Endothelial cell of umbilical vein (primary cell): ENCODE measurements at regions of chr15 and their contacts with region 1.

Region 1: DNA sequence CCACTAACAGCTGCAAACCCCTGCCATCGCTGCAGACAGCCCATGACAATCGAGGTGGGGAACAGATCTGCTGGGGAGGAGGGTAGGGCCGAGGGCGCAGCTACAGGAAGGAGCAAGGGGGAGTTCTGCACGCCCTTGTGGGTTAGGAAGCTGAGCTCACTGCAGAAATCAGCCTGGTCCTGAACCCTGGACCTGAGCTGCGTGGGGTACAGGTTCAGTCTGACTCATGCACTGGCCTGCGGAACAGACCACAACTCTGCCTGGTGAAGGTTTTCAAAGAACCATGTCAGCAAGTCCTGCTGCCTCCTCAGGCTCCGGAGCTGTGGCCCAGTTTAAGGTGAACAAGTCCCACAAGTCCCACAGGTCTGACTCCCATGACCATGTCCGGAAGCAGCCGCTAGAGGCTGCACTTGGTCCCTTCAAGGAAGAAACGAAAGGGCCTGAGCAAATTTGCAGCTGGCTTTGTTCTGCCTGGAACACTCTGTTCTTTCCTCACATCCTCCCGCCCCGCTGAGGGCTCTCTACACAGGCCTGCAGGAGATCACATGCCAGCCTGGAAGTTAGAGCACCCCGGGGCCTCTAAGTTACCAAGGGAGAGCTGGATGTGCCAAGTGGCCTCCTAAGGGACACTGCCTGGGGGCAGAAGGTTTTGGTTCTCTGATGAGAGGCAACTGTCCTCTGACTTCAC is 49.4 kb upstream of the AKAP13 start:
- DNase-seq: peak; percentile 73
- H3K4me3 ChIP-seq: no peak overlapping the region
- H3K27ac ChIP-seq: peak overlapping the region; percentile 6
- H3K4me1 ChIP-seq: peaks cover 14% of the 10 kb centered on the region
- H3K27me3 ChIP-seq: no peaks in the 10 kb centered on the region
- CTCF ChIP-seq: peak; percentile 72 to 79
- POLR2A ChIP-seq: no peak

Region 2: GRCh38 chr15:85380217-85380811 is 49.3 kb after region 1 on chr15 and contains the start of gene AKAP13:
- CTCF ChIA-PET with region 1: interaction called, 5 read pairs
- POLR2A ChIA-PET with region 1: no interaction called
- dilution Hi-C with region 1: no loop called
- intact Hi-C with region 1: loop called (anchors 1 kb)
- DNase-seq: peak; percentile 99
- H3K4me3 ChIP-seq: peak within 1 kb of the TSS; percentile 57 to 79 (median 78)
- H3K27ac ChIP-seq: peak within 1 kb of the TSS; percentile 56
- H3K4me1 ChIP-seq: peaks cover 8% of the 10 kb centered on the region
- H3K27me3 ChIP-seq: no peaks in the 10 kb centered on the region
- CTCF ChIP-seq: no peak
- POLR2A ChIP-seq: peak; percentile 54
- total RNA-seq, gene AKAP13: 80.3 and 87.8 TPM in 2 replicates

Region 3: GRCh38 chr15:85403745-85404144 is 72.7 kb after region 1 on chr15:
- CTCF ChIA-PET with region 1: interaction called, 11 read pairs
- POLR2A ChIA-PET with region 1: no interaction called
- dilution Hi-C with region 1: no loop called
- intact Hi-C with region 1: no loop called
- DNase-seq: no peak
- H3K4me3 ChIP-seq: no peak overlapping the region
- H3K27ac ChIP-seq: no peak overlapping the region
- H3K4me1 ChIP-seq: peaks cover 56% of the 10 kb centered on the region
- H3K27me3 ChIP-seq: no peaks in the 10 kb centered on the region
- CTCF ChIP-seq: no peak
- POLR2A ChIP-seq: no peak

Region 4: DNA sequence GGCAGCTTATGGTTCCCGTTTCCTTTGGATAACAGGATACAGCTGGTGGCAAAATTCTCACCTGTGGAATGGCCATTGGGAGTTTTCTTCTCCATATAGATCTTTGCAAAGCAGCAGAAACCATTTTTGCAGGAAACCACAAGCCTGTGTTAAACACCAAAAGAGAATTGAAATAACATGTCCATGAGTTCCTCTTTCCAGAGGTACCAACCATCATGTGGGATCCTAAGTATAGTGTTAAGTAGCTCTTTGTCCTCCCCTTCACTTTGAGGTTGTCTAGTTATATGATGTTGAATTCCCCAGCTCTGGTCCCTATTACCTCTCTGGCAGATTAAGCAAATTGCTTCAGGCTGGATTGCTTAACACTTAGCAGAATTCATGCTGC is 144.3 kb after region 1 on chr15:
- CTCF ChIA-PET with region 1: interaction called, 7 read pairs
- POLR2A ChIA-PET with region 1: no interaction called
- dilution Hi-C with region 1: no loop called
- intact Hi-C with region 1: loop called (anchors 2 kb)
- DNase-seq: peak; percentile 63
- H3K4me3 ChIP-seq: no peak overlapping the region
- H3K27ac ChIP-seq: no peak overlapping the region
- H3K4me1 ChIP-seq: peaks cover 40% of the 10 kb centered on the region
- H3K27me3 ChIP-seq: no peaks in the 10 kb centered on the region
- CTCF ChIP-seq: no peak
- POLR2A ChIP-seq: no peak

Region 5: DNA sequence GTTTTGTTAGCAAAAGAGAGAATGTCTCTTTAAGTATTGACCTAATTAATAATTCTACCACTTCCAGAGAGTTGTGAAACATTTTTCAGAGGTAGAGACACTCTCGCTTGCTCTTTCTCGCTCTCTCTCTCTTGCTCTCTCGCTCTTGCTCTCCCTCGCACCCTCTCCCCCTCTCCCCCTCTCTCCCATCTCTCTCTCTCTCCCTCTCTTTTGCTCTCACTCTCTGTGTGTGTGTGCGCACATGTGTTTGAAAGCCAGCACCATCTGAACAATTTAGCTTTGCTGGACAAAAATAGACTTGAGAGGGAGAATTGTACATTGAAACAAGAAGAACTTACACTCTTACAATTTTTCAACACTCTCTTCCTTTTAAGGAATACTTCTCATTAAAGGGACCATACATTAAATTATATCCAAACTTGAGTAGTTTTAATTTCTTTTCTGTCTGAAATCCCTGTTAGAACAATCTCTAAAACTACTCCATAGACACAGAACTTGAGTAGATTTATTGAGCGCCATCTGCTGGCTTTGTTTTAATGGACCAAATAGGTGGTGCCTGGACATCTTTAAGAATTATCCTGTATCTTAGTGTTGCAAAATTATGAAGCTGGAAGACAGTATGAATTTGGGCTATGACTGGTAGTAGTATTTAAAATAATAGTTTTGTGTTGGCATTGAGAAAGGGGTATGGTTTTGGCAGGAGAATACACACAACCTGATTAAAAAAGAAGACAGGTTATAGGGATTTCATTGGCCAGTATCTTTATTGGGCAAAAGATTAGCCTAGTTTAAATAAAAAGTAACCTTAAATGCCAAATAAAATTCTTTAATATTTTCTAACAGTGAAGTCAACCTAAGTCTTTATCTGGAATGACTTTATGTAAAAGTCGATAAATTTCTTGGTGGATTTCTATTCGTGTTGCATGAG is 174.0 kb after region 1 on chr15:
- CTCF ChIA-PET with region 1: interaction called, 9 read pairs
- POLR2A ChIA-PET with region 1: no interaction called
- dilution Hi-C with region 1: no loop called
- intact Hi-C with region 1: loop called (anchors 1 kb)
- DNase-seq: peak; percentile 64
- H3K4me3 ChIP-seq: no peak overlapping the region
- H3K27ac ChIP-seq: no peak overlapping the region
- H3K4me1 ChIP-seq: peaks cover 11% of the 10 kb centered on the region
- H3K27me3 ChIP-seq: no peaks in the 10 kb centered on the region
- CTCF ChIP-seq: peak; percentile 34 to 41
- POLR2A ChIP-seq: no peak

Region 6: DNA sequence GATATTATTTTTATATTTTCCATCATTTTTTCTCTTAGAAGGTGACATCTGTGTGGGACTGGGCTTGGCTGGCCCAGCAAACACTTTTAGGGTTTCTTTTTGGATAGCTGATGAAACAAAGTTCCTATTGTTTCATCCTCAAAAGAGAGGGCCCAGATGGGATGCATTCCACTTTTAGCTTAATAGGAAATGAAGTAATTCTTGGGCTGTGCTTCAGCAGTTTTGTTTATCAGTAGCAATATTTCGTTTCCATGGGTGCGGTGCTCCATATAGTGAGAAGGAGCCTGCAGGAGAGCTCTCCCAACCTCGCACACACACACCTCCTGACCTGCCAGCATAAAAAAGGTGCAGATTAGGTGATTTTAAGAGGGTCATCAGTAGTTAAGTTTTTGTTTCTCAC is 196.8 kb after region 1 on chr15:
- CTCF ChIA-PET with region 1: no interaction called
- POLR2A ChIA-PET with region 1: no interaction called
- dilution Hi-C with region 1: no loop called
- intact Hi-C with region 1: no loop called
- DNase-seq: peak; percentile 86
- H3K4me3 ChIP-seq: no peak overlapping the region
- H3K27ac ChIP-seq: peak overlapping the region; percentile 59
- H3K4me1 ChIP-seq: peaks cover 13% of the 10 kb centered on the region
- H3K27me3 ChIP-seq: no peaks in the 10 kb centered on the region
- CTCF ChIP-seq: no peak
- POLR2A ChIP-seq: no peak